GM13977 (cell line): ENCODE measurements at regions of chr15 and their contacts with region 1.

Region 1: GRCh38 chr15:42929306-42929848 is 8.8 kb upstream of the TTBK2 start:
- DNase-seq: no peak
- CTCF ChIP-seq: no peak

Region 2: GRCh38 chr15:42707068-42707467 is 222.3 kb before region 1 on chr15:
- in situ Hi-C with region 1: loop called (anchors 5 kb)
- DNase-seq: no peak
- CTCF ChIP-seq: no peak

Region 3: GRCh38 chr15:43086551-43086950 is 157.2 kb after region 1 on chr15:
- in situ Hi-C with region 1: no loop called
- DNase-seq: peak; percentile 31
- CTCF ChIP-seq: no peak